ENCODE measurements at regions of chr20 and their contacts with region 1.

Region 1: DNA sequence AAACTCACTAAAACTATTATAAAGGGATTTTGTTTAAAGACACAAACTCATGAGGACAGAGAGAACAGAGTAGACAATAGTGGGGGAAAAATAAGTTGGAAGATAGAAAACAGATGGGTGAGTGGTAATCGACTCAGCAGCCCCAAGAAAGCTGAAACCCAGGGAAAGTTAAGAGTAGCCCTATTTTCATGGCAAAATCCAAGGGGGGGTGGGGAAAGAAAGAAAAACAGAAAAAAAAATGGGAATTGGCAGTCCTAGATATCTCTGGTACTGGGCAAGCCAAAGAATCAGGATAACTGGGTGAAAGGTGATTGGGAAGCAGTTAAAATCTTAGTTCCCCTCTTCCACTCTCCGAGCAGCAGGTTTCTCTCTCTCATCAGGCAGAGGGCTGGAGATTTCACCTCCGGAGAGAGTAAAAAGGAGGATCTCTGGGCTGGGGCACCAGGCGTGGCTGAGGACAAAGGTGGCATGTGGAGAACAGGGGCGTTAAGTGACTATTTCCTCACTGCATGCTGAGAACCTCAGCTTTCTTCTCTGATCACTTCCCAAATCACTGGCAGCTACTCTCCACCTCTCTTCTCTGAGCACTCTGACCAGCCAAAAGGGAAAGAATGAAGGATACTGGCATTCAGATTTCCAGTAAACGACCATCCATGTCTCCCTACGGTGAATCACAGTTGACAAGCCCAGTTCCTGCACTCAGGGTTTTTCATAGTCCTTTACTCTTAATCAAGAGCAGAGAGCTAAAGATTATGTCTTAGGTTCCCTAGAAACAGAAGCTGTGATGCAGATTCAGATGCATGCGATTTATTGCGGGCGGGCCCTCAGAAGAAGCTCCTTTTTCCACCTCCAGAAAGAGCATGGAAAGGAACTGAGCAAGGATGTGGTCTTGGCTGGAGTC is 7.3 kb upstream of the RNF24 start:
- DNase-seq: no peak
- ATAC-seq: no peak
- H3K4me3 ChIP-seq: no peak overlapping the region
- H3K27ac ChIP-seq: no peak overlapping the region
- H3K4me1 ChIP-seq: no peaks in the 10 kb centered on the region
- H3K27me3 ChIP-seq: no peaks in the 10 kb centered on the region
- CTCF ChIP-seq: no peak

Region 2: GRCh38 chr20:3606021-3606420 is 416.6 kb before region 1 on chr20:
- intact Hi-C with region 1: no loop called
- DNase-seq: no peak
- ATAC-seq: no peak
- H3K4me3 ChIP-seq: no peak overlapping the region
- H3K27ac ChIP-seq: no peak overlapping the region
- H3K4me1 ChIP-seq: no peaks in the 10 kb centered on the region
- H3K27me3 ChIP-seq: no peaks in the 10 kb centered on the region
- CTCF ChIP-seq: no peak

Region 3: GRCh38 chr20:4064144-4064909 is 41.7 kb after region 1 on chr20:
- intact Hi-C with region 1: loop called in 1 of 2 experiments (anchors 5 kb)
- DNase-seq: peak; percentile 91 to 94
- ATAC-seq: peak; percentile 80 to 93 (median 84)
- H3K4me3 ChIP-seq: no peak overlapping the region
- H3K27ac ChIP-seq: peak overlapping the region; percentile 67
- H3K4me1 ChIP-seq: peaks cover 11% of the 10 kb centered on the region
- H3K27me3 ChIP-seq: no peaks in the 10 kb centered on the region
- CTCF ChIP-seq: no peak

Region 4: DNA sequence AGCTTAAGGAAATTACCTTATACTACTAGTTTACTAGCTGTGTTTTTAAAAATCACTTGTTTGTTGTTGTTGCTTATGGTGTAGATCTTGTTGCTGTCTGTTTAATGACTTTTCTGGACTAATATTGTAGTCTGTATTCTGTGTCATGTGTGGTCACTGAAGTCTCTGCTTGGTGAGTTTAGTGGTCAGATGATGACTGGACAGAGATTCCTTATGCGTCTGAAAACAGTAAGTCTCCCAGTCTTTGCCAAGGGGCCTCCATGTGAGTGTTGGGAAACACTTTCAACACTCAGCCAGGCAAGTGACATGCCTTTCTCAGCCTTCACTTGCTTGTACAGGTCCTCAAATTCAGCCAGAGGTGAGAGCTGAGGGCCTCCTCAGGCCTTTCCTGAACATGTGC is 249.6 kb after region 1 on chr20:
- intact Hi-C with region 1: no loop called
- DNase-seq: no peak
- ATAC-seq: no peak
- H3K4me3 ChIP-seq: no peak overlapping the region
- H3K27ac ChIP-seq: no peak overlapping the region
- H3K4me1 ChIP-seq: no peaks in the 10 kb centered on the region
- H3K27me3 ChIP-seq: no peaks in the 10 kb centered on the region
- CTCF ChIP-seq: no peak

Measured in psoas muscle (tissue), 8 donors.